ENCODE measurements at regions of chr15 and their contacts with region 1.

Region 1: GRCh38 chr15:98493917-98494511 is 154.3 kb upstream of the IGF1R start:
- DNase-seq: no peak
- ATAC-seq: no peak
- H3K4me3 Mint-ChIP-seq: no peak overlapping the region
- H3K27ac Mint-ChIP-seq: no peak overlapping the region
- H3K4me1 Mint-ChIP-seq: no peaks in the 10 kb centered on the region
- H3K27me3 Mint-ChIP-seq: peaks cover 5% of the 10 kb centered on the region

Region 2: GRCh38 chr15:98321896-98322295 is 172.1 kb before region 1 on chr15:
- CTCF ChIA-PET with region 1: no interaction called
- POLR2A ChIA-PET with region 1: no interaction called
- intact Hi-C with region 1: no loop called
- DNase-seq: no peak
- ATAC-seq: no peak
- H3K4me3 Mint-ChIP-seq: no peak overlapping the region
- H3K27ac Mint-ChIP-seq: no peak overlapping the region
- H3K4me1 Mint-ChIP-seq: no peaks in the 10 kb centered on the region
- H3K27me3 Mint-ChIP-seq: no peaks in the 10 kb centered on the region

Region 3: DNA sequence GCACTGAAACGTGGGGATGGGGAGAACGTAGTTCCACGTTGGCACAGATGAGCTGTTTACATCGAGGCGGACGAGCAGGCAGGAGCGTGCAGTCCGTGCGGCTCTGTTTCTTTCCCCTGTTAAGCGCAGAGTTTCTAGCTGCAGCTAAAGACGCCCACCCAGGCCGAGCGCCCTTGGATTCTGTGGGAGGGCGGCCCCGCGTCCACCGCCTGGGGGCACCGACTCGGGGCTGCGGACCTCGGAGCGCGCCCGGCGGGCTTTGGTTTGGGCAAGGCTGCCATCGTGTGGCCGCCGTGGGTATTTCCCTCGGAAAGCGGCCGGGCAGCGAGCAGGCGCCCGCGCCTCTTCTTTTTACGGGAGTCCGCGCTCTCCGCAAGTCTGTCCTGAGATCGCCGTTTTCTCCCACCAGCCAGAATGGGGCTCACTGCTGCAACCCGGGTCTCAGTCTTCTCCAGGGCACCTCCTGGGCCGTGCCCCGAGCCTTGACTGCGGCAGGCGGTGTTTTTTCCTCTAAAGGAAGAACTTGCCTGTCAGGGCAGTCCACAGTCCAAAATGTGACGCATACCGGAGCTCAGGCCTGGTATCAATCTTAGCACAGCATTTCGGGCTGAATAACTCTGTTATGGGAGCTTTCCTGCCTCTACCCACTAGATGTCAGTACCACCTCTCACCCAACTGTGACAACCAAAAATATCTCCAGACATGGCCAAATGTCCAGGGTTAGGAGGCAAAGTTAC is 65.6 kb before region 1 on chr15:
- CTCF ChIA-PET with region 1: no interaction called
- POLR2A ChIA-PET with region 1: no interaction called
- intact Hi-C with region 1: loop called in 1 of 2 experiments (anchors 10 kb)
- DNase-seq: peak; percentile 79
- ATAC-seq: peak; percentile 80
- H3K4me3 Mint-ChIP-seq: peak overlapping the region; percentile 54
- H3K27ac Mint-ChIP-seq: no peak overlapping the region
- H3K4me1 Mint-ChIP-seq: peaks cover 4% of the 10 kb centered on the region
- H3K27me3 Mint-ChIP-seq: peaks cover 42% of the 10 kb centered on the region